ENCODE measurements at regions of chr22 and their contacts with region 1.

Region 1: GRCh38 chr22:49724893-49725474 is 102.7 kb downstream of the BRD1 start:
- DNase-seq: peak; percentile 37
- ATAC-seq: peak; percentile 57
- H3K4me3 Mint-ChIP-seq: peak overlapping the region; percentile 53
- H3K27ac Mint-ChIP-seq: no peak overlapping the region
- H3K4me1 Mint-ChIP-seq: peaks cover 8% of the 10 kb centered on the region
- H3K27me3 Mint-ChIP-seq: peaks cover 33% of the 10 kb centered on the region
- CTCF ChIP-seq: no peak

Region 2: GRCh38 chr22:49305214-49305909 is 419.6 kb before region 1 on chr22:
- CTCF ChIA-PET with region 1: no interaction called
- POLR2A ChIA-PET with region 1: no interaction called
- intact Hi-C with region 1: loop called (anchors 10 kb)
- DNase-seq: peak; percentile 52
- ATAC-seq: no peak
- H3K4me3 Mint-ChIP-seq: no peak overlapping the region
- H3K27ac Mint-ChIP-seq: no peak overlapping the region
- H3K4me1 Mint-ChIP-seq: no peaks in the 10 kb centered on the region
- H3K27me3 Mint-ChIP-seq: peaks cover 19% of the 10 kb centered on the region
- CTCF ChIP-seq: no peak

Measured in activated B cell treated with CpG ODN at 0.5 μM for 24 hours (primary cell).